ENCODE measurements at regions of chrX and their contacts with region 1.

Region 1: DNA sequence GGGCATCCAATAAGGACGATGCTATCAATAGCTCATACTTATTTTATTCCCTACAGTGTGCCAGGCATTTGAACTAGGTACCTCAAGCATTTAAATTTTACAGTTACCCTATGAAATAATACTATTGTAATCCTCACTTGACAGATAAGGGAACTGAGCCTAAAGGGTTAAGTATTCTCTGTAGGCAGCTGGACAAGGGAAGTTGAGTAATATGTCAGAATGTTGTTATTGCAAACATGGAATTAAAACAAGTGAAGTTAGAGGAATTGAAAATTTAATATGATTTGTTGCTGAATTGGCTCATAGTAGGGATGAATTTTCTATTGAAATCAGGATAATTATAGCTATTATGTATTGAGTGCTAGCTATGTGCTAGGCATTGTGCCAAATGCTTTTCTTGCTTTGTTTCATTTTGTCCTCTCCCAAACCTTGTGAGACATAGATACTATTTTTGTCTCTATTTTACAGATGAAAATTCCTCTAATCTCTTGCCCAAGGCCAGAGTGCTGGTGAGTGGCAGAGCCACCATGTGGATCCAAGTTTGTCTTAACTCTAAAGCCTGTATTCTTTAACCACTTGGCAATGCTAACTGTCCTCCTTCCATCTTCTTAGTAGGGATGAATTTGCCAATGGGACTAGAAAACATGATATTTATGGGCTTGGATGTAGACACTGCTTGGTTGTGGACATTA is 58.1 kb downstream of the TMEM164 start:
- DNase-seq: no peak
- ATAC-seq: no peak

Region 2: DNA sequence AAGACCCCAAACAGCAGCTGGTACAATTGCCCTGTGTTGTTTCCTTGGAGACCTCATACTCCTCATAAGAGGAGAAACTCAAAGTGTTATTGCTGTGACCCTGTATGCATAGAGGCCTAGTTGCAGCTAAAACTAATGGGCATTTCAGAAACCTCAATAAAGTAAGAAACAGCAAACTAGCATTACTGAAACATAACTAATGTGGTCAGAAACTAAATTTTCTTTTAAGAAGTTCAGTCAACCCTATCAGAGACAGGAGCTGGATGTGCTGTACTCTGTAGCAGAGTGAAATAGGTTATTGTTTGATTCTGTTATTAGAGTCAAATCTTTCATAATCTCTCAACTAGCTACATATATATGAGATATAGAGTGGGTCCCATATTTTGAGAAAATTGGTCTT is 1067.1 kb before region 1 on chrX:
- intact Hi-C with region 1: loop called (anchors 5 kb)
- DNase-seq: no peak
- ATAC-seq: no peak

Region 3: DNA sequence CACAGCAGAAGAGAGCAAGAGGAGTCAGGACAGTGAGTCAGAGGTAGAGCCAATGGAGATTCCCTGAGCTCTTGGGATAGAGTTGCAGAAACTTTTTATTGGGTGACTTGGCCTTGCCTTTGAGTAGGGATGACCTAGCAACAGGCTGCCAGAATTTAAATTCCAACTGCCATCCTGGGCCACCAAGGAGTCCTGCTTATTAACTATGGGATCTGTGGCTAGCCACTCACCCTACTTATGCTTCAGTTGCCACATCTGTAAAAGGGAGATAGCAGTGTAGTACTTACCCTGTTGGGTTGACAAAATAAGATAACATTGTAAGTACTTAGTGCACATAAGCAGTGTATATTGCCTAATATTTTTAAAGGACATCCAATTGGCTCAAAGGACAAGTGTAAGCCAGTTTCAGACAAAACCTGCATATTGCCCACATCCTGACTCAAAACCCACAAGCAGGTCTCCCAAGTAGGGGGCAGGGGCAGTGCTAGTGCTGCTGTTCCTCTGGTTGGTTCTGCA is 101.6 kb before region 1 on chrX:
- intact Hi-C with region 1: no loop called
- DNase-seq: no peak
- ATAC-seq: no peak

Region 4: GRCh38 chrX:110180176-110180927 is 119.4 kb after region 1 on chrX:
- intact Hi-C with region 1: no loop called
- DNase-seq: no peak
- ATAC-seq: peak; percentile 60